Mammary epithelial cell (primary cell): ENCODE measurements at regions of chr10 and their contacts with region 1.

Region 1: GRCh38 chr10:120336911-120337540 is 120.0 kb upstream of the PLPP4 start:
- DNase-seq: peak; percentile 45
- H3K4me3 ChIP-seq: no peak overlapping the region
- H3K27ac ChIP-seq: no peak overlapping the region
- H3K4me1 ChIP-seq: no peaks in the 10 kb centered on the region
- H3K27me3 ChIP-seq: peaks cover 10% of the 10 kb centered on the region
- CTCF ChIP-seq: peak; percentile 89 to 92

Region 2: GRCh38 chr10:119933179-119933578 is 403.8 kb before region 1 on chr10:
- CTCF ChIA-PET with region 1: no interaction called
- dilution Hi-C with region 1: no loop called
- in situ Hi-C with region 1: loop called in 1 of 2 experiments (anchors 25 kb)
- intact Hi-C with region 1: loop called (anchors 2 kb)
- DNase-seq: no peak
- H3K4me3 ChIP-seq: no peak overlapping the region
- H3K27ac ChIP-seq: no peak overlapping the region
- H3K4me1 ChIP-seq: no peaks in the 10 kb centered on the region
- H3K27me3 ChIP-seq: no peaks in the 10 kb centered on the region
- CTCF ChIP-seq: peak; percentile 7 to 23

Region 3: DNA sequence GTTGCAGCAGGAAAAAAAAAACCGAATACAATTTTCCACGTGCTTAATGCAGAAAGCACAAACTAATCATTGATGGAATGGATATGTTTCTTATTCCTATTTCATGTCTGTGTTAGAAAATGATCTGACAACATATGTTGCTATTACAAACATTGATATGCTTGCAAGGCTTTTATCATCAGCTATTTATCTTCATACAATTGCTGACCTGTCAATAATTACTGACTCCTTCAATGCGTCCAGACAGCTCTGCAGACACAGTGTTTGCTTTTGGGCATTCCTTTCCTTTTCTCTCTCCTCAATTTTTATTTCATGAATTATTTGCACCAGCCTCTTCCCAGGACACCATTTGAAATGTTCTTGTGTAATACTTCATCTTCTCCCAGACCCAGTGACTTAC is 198.3 kb before region 1 on chr10:
- CTCF ChIA-PET with region 1: no interaction called
- dilution Hi-C with region 1: no loop called
- in situ Hi-C with region 1: no loop called
- intact Hi-C with region 1: loop called (anchors 5 kb)
- DNase-seq: no peak
- H3K4me3 ChIP-seq: no peak overlapping the region
- H3K27ac ChIP-seq: no peak overlapping the region
- H3K4me1 ChIP-seq: no peaks in the 10 kb centered on the region
- H3K27me3 ChIP-seq: no peaks in the 10 kb centered on the region
- CTCF ChIP-seq: no peak

Region 4: GRCh38 chr10:120221873-120222485 is 115.0 kb before region 1 on chr10:
- CTCF ChIA-PET with region 1: no interaction called
- dilution Hi-C with region 1: no loop called
- in situ Hi-C with region 1: no loop called
- intact Hi-C with region 1: loop called (anchors 1 kb)
- DNase-seq: peak; percentile 45
- H3K4me3 ChIP-seq: no peak overlapping the region
- H3K27ac ChIP-seq: no peak overlapping the region
- H3K4me1 ChIP-seq: no peaks in the 10 kb centered on the region
- H3K27me3 ChIP-seq: no peaks in the 10 kb centered on the region
- CTCF ChIP-seq: peak; percentile 57 to 64